Left colon (tissue), 2 donors: ENCODE measurements at regions of chr7 and their contacts with region 1.

Region 1: GRCh38 chr7:136009488-136010079 is 32.4 kb upstream of the MTPN start:
- DNase-seq: no peak
- ATAC-seq: no peak

Region 2: GRCh38 chr7:135672560-135673359 is 336.8 kb before region 1 on chr7:
- intact Hi-C with region 1: loop called in 1 of 2 experiments (anchors 5 kb)
- DNase-seq: no peak
- ATAC-seq: peak; percentile 72

Region 3: GRCh38 chr7:135795846-135796570 is 213.6 kb before region 1 on chr7:
- intact Hi-C with region 1: loop called (anchors 5 kb)
- DNase-seq: no peak
- ATAC-seq: no peak

Region 4: GRCh38 chr7:135801045-135801693 is 208.4 kb before region 1 on chr7:
- intact Hi-C with region 1: loop called in 1 of 2 experiments (anchors 5 kb)
- DNase-seq: no peak
- ATAC-seq: peak; percentile 70